ENCODE measurements at regions of chr11 and their contacts with region 1.

Region 1: DNA sequence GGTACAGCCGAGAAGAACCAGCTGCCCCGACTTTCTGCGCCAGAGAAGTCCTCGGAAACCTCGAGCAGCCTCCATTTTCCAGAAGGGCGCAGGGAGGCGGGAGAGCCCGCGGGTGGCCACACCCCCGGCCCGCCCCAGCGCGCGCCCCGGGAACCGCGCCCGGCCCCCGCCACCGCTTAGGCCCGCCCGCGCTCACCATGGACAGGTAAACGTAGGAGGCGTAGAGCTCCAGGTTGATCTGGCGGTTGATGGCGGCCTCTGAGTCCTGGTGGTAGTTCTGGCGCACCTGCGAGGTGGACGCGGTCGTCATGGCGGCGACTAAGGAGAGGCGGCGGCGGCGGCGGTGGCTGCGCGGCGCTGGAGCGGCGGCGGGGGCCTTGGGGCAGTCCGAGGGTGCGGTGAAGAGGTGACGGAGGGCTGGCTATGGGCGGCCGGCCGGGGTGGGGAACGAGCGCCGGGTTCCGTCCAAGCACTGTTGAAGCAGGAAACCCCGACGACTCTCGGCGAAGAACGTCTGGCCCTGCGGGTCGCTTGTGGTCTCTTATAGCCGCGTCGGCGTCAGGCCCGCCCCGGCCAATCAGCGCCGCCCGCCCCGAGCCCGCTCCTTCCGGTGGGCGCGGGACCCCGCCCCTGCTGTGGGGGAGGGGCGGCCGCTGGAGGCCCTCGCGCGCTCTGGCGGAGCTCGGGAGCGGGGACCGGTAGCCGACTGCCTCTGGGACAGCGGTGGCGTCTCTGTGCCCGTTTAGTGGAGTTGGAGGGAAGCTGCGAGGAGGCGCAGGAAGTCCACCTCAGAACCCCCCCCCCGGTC is at the start of gene FTH1:
- DNase-seq: peak; percentile 90
- ATAC-seq: peak; percentile 76
- H3K4me3 Mint-ChIP-seq: peak within 1 kb of the TSS; percentile 93
- H3K27ac Mint-ChIP-seq: peak within 1 kb of the TSS; percentile 97
- H3K4me1 Mint-ChIP-seq: peaks cover 65% of the 10 kb centered on the region
- H3K27me3 Mint-ChIP-seq: no peaks in the 10 kb centered on the region
- total RNA-seq, gene FTH1: 709 to 727 TPM

Region 2: GRCh38 chr11:61834278-61835048 is 132.9 kb before region 1 on chr11:
- CTCF ChIA-PET with region 1: no interaction called
- POLR2A ChIA-PET with region 1: interaction called, 10 read pairs
- DNase-seq: peak; percentile 91
- ATAC-seq: peak; percentile 99
- H3K4me3 Mint-ChIP-seq: peak overlapping the region; percentile 77
- H3K27ac Mint-ChIP-seq: peak overlapping the region; percentile 95
- H3K4me1 Mint-ChIP-seq: peaks cover 69% of the 10 kb centered on the region
- H3K27me3 Mint-ChIP-seq: no peaks in the 10 kb centered on the region

Region 3: GRCh38 chr11:61912530-61912898 is 54.8 kb before region 1 on chr11:
- CTCF ChIA-PET with region 1: no interaction called
- POLR2A ChIA-PET with region 1: no interaction called
- DNase-seq: no peak
- ATAC-seq: no peak
- H3K4me3 Mint-ChIP-seq: no peak overlapping the region
- H3K27ac Mint-ChIP-seq: no peak overlapping the region
- H3K4me1 Mint-ChIP-seq: no peaks in the 10 kb centered on the region
- H3K27me3 Mint-ChIP-seq: peaks cover 20% of the 10 kb centered on the region

Region 4: DNA sequence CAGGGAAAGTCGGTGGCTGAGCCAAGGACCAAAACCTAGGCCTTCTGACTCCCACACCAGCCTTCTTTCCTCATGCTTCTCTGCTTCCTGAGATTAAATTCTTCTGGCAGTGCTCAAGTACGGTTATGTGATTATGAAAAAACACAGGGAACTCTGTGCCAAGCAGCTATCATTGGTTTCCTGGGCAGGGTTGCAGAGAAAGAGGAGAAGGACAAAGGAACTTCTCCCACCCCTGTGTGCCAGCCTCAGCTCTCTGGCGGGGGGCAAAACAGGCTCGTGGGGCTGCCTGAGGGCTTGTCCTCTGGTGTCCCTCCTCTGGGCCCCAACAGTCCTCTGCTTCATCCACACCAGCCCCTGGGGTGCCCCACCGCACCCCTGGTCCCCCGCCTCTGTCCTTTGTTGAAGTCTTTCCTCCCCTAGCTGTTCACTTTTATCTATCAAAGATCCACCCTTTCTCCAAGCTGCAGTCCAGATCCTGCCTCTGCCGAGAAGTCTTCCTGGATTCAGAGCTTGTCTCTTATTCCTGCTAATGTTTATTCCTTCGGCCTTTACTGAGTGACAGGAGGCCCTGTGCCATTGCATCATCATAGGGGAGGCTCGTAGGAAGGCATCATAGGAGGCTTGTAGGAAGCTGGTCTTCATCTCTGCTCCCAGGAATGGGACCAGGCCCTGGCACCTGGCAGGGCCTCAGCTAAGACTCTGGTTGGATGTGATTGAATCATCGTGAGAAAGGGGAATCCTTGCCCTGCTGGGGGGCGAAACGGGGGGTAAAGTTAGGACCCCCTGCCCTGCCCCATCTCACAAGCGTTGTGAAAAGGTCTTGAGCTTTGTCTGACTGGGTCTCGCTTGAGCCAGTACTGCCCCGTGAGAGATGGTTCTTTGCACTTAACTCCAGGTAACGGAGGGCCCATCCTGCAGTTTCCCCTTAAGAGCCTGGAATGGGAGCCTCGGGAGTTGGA is 11.7 kb after region 1 on chr11:
- CTCF ChIA-PET with region 1: interaction called, 3 read pairs
- POLR2A ChIA-PET with region 1: interaction called, 13 read pairs
- DNase-seq: no peak
- ATAC-seq: no peak
- H3K4me3 Mint-ChIP-seq: no peak overlapping the region
- H3K27ac Mint-ChIP-seq: no peak overlapping the region
- H3K4me1 Mint-ChIP-seq: peaks cover 9% of the 10 kb centered on the region
- H3K27me3 Mint-ChIP-seq: no peaks in the 10 kb centered on the region

Region 5: DNA sequence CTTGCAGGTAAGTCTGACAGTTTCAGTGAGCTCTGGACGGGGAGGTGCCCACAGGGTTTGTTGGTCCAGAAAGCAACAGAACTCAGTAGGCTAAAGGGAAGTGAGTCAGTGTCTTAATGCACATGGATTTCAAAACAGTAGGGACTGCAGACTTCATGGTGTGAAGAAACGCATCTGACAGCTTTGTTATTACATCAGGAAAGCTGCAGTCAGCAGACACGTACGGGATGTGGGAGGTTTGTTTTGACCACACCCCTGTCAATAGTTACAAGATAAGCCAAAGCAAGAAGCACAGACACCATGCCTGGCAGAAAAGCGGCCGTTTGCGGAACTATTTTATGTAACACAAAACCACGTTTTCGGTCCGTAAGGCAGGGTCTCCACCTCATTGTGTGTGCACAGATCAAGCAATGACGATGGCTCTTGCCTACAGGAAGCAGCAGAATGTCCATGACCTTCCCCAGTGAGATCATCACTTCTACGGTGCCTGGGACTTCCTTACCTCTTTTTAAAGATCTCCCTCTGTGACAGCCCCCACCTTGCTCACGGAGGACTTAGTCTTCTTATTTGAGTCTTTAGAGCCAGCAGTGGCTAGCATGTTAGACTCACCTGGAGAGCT is 58.3 kb after region 1 on chr11:
- CTCF ChIA-PET with region 1: interaction called, 3 read pairs
- POLR2A ChIA-PET with region 1: interaction called, 24 read pairs
- DNase-seq: peak; percentile 85
- ATAC-seq: peak; percentile 93
- H3K4me3 Mint-ChIP-seq: peak overlapping the region; percentile 63
- H3K27ac Mint-ChIP-seq: peak overlapping the region; percentile 98
- H3K4me1 Mint-ChIP-seq: peaks cover 14% of the 10 kb centered on the region
- H3K27me3 Mint-ChIP-seq: peaks cover 3% of the 10 kb centered on the region

Region 6: DNA sequence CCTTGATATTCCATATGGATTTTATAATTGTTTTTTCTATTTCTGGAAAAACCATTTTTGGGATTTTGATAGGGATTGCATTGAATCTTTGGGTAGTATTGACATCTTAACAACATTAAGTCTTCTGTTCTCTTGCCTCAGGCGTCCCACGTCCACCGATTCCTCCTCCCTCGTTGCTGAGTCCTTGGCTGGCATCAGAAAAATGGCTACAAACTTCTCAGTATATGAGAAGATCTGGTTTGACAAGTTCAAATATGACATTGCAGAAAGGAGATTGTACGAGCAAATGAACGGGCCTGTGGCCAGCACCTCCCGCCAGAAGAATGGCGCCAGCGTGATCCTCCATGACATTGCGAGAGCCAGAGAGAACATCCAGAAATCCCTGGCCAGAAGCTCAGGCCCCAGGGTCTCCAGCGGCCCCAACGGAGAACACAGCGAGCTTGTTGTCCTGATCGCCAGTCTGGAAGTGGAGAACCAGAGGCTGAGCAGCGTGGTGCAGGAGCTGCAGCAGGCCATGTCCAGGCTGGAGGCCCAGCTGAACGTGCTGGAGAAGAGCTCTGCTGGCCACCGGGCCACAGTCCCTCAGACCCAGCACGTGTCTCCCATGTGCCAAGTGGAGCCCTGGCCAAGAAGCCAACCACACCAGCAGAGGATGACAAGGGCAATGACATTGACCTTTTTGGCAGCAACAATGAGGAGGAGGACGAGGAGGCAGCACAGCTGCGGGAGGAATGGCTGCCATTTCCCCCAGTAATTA is 201.9 kb after region 1 on chr11:
- CTCF ChIA-PET with region 1: no interaction called
- POLR2A ChIA-PET with region 1: no interaction called
- DNase-seq: no peak
- ATAC-seq: no peak
- H3K4me3 Mint-ChIP-seq: no peak overlapping the region
- H3K27ac Mint-ChIP-seq: no peak overlapping the region
- H3K4me1 Mint-ChIP-seq: peaks cover 2% of the 10 kb centered on the region
- H3K27me3 Mint-ChIP-seq: peaks cover 28% of the 10 kb centered on the region

Measured in activated CD8-positive, alpha-beta T cell treated with anti-CD3 and anti-CD28 coated beads, Interleukin-2, amount 10 ng/mL, durations not matched to agents 7 days and 5 days (primary cell).